WTC11 (cell line): ENCODE measurements at regions of chr17 and their contacts with region 1.

Region 1: GRCh38 chr17:16521070-16521727 is 29.2 kb upstream of the LRRC75A start:
- DNase-seq: peak; percentile 64
- ATAC-seq: peak; percentile 87
- H3K4me3 Mint-ChIP-seq: no peak overlapping the region
- H3K27ac Mint-ChIP-seq: no peak overlapping the region
- H3K4me1 Mint-ChIP-seq: peaks cover 14% of the 10 kb centered on the region
- H3K27me3 Mint-ChIP-seq: peaks cover 20% of the 10 kb centered on the region
- CTCF ChIP-seq: peak; percentile 68

Region 2: GRCh38 chr17:16428098-16428882 is 92.9 kb before region 1 on chr17:
- CTCF ChIA-PET with region 1: interaction called, 15 read pairs
- POLR2A ChIA-PET with region 1: no interaction called
- DNase-seq: peak; percentile 74
- ATAC-seq: peak; percentile 85
- H3K4me3 Mint-ChIP-seq: no peak overlapping the region
- H3K27ac Mint-ChIP-seq: no peak overlapping the region
- H3K4me1 Mint-ChIP-seq: peaks cover 4% of the 10 kb centered on the region
- H3K27me3 Mint-ChIP-seq: peaks cover 7% of the 10 kb centered on the region; the same call in 1 of the 2 replicates
- CTCF ChIP-seq: peak; percentile 27; the same call in 1 of the 2 replicates

Region 3: GRCh38 chr17:16453493-16453851 is 67.7 kb before region 1 on chr17:
- CTCF ChIA-PET with region 1: interaction called, 204 read pairs
- POLR2A ChIA-PET with region 1: no interaction called
- DNase-seq: no peak
- ATAC-seq: no peak
- H3K4me3 Mint-ChIP-seq: no peak overlapping the region
- H3K27ac Mint-ChIP-seq: peak overlapping the region; percentile 73
- H3K4me1 Mint-ChIP-seq: peaks cover 16% of the 10 kb centered on the region
- H3K27me3 Mint-ChIP-seq: no peaks in the 10 kb centered on the region
- CTCF ChIP-seq: no peak; the same call in 1 of the 2 replicates

Region 4: DNA sequence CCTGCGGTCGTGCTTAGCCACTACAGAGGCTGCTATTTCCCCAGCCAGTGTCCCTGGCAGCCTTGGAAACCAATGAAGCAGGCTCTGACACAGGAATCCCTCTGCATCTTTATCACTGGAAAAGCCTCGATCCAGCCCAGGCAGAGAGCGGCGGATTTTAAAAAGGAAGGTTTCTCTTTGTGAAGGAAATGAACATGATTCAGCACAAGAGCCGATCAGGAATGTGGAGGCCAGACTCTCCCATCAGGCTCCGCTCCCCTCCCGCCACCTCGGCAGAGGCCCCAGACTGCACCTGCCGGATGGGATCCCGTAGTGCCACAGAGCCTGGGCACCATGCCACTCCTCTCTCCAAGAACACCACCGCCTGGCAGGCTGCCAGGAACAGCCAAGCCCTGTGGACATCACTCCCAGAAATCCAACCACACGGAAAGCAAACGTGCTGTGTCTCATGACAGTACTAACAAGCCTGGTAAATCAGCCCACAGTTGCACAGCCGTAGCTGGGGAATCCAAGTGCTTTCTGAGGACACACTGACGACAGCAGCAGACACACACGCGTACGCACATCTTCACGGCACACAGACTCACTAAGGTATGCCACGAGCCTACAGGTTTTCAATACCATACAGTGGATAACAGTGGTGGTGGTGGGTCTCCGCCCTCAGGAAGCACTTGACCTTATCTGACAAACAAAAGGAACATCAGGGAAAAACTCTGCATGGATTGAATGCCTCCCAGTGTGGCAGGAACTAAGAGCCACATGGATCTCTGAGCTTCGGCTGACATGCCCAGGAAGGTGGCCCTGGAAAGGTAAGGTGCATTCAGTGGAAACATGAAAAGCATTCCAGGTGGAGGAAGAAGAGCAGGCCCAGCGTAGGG is 34.6 kb before region 1 on chr17:
- CTCF ChIA-PET with region 1: interaction called, 14 read pairs
- POLR2A ChIA-PET with region 1: no interaction called
- DNase-seq: peak; percentile 50
- ATAC-seq: peak; percentile 14
- H3K4me3 Mint-ChIP-seq: peak overlapping the region; percentile 19; the same call in 1 of the 2 replicates
- H3K27ac Mint-ChIP-seq: peak overlapping the region; percentile 98
- H3K4me1 Mint-ChIP-seq: peaks cover 80% of the 10 kb centered on the region
- H3K27me3 Mint-ChIP-seq: peaks cover 9% of the 10 kb centered on the region; the same call in 1 of the 2 replicates
- CTCF ChIP-seq: no peak

Region 5: GRCh38 chr17:16537130-16537458 is 15.9 kb after region 1 on chr17:
- CTCF ChIA-PET with region 1: interaction called, 31 read pairs
- POLR2A ChIA-PET with region 1: no interaction called
- DNase-seq: no peak
- ATAC-seq: no peak
- H3K4me3 Mint-ChIP-seq: peak overlapping the region; percentile 98; the same call in 1 of the 2 replicates
- H3K27ac Mint-ChIP-seq: no peak overlapping the region
- H3K4me1 Mint-ChIP-seq: peaks cover 9% of the 10 kb centered on the region; the same call in 1 of the 2 replicates
- H3K27me3 Mint-ChIP-seq: no peaks in the 10 kb centered on the region
- CTCF ChIP-seq: no peak